ENCODE measurements at regions of chr11 and their contacts with region 1.

Region 1: DNA sequence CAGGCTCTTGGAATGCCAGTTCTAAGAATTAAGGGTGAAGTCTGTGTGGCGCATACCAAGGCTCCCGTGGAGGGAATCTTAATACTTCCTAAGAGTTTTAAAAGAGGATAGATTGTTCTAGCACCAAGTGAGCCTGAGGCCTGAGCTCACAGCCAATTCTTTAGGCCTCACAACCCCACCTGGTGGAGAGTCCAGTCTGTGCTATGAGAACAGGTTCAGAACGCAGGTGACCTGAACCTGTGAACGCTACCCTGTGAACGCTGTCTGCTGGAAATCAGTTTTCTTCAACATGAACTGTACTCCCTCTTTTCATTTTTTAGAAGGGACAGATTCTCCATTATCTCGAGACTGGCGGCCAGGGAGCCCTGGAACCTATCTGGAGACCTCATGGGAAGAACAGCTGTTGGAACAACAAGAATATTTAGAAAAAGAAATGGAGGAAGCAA is 43.2 kb upstream of the DLAT start:
- DNase-seq: peak in 1 of 2 donors; percentile 57
- H3K4me3 ChIP-seq: no peak overlapping the region
- CTCF ChIP-seq: no peak
- POLR2A ChIP-seq: no peak

Region 2: GRCh38 chr11:111911563-111912401 is 70.3 kb before region 1 on chr11 and contains the start of gene CRYAB:
- intact Hi-C with region 1: no loop called
- DNase-seq: peak; percentile 94 to 97
- H3K4me3 ChIP-seq: peak within 1 kb of the TSS; percentile 38
- CTCF ChIP-seq: no peak
- POLR2A ChIP-seq: no peak
- total RNA-seq, gene CRYAB: 130 to 209 (median 200) TPM

Region 3: DNA sequence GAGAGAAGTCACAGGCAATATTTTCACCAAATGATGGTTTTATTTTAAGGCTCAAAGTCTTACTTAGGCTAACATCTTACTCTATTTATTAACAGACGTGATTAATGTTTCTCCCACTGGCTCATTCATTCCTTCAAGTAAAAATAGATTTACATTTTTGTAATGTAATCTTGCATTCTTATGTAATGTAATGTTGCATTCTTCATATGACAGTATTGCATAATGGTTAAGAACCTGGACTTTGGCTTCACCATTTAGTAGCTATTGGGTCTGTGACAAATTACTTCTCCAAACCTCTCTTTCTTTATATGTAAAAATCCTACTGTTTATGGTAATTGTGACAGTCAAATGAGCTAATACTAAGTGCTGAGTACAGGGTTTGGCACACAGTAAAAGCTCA is 48.2 kb before region 1 on chr11:
- intact Hi-C with region 1: loop called (anchors 5 kb)
- DNase-seq: no peak
- H3K4me3 ChIP-seq: no peak overlapping the region
- CTCF ChIP-seq: no peak
- POLR2A ChIP-seq: no peak

Region 4: GRCh38 chr11:113289431-113290187 is 1307.6 kb after region 1 on chr11:
- intact Hi-C with region 1: no loop called
- DNase-seq: peak in 1 of 2 donors; percentile 22
- H3K4me3 ChIP-seq: no peak overlapping the region
- CTCF ChIP-seq: peak in 1 of 3 donors; percentile 13
- POLR2A ChIP-seq: no peak